ENCODE measurements at regions of chr15 and their contacts with region 1.

Region 1: DNA sequence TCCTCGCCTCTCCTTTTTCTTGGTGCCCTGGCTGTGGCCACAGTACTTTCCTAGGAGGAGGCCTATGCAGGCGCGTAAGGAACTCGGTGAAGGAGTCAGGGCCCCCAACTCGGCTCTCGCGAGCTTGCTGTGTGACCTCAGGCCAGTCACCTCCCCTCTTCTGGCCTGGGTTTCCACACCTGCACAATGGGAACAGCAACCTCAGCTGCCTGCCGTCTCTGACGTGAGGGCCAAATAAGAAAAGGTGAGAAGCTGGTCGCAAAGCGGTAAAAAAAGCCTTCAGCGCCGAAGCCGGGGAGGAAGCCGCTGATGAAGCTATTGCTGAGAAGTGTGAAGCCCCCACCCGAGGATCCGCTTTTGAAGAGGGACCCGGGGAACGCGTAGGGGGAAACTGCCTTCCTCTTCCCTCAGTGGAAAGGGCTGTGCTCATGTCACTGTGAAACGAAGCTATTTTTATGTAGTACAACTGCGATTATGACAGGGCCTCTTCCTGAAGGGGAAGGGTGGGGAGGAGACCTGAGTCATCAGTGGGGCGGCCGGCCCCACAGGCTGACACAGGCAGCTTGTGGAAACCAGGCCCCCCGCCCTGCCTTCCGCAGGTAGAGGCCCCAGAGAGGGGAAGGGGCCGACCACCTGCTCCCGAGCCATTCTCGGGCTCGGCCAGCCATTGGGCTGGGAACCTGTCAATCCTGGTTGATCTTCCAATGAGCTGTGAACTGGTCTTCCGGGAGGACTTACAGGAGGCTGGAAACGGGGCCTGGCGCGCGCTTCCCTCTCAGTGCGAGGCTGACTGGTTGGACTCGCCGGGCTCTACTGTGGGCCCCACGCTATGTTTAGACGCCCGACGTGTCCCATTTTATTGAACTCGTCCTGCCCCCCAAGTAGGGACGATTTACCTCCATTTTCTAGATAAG is 18.0 kb upstream of the ANKDD1A start:
- DNase-seq: peak; percentile 99
- ATAC-seq: peak; percentile 81
- H3K4me3 ChIP-seq: peak overlapping the region; percentile 78
- H3K27ac ChIP-seq: peak overlapping the region; percentile 97
- H3K4me1 ChIP-seq: peaks cover 42% of the 10 kb centered on the region
- H3K27me3 ChIP-seq: no peaks in the 10 kb centered on the region
- CTCF ChIP-seq: no peak
- EP300 ChIP-seq: peak in 1 of 2 experiments; percentile 72; a peak in 2 of 4 replicates
- POLR2A ChIP-seq: peak; percentile 86
- RAD21 ChIP-seq: no peak; the same call in 1 of the 2 replicates

Region 2: GRCh38 chr15:63487076-63487757 is 1406.5 kb before region 1 on chr15:
- CTCF ChIA-PET with region 1: no interaction called
- POLR2A ChIA-PET with region 1: no interaction called
- RAD21 ChIA-PET with region 1: no interaction called
- SMC1A ChIA-PET with region 1: no interaction called
- in situ Hi-C with region 1: loop called (anchors 25 kb)
- intact Hi-C with region 1: no loop called
- DNase-seq: no peak
- ATAC-seq: peak; percentile 74
- H3K4me3 ChIP-seq: peak overlapping the region; percentile 42; the same call in 1 of the 2 replicates
- H3K27ac ChIP-seq: peak overlapping the region; percentile 89
- H3K4me1 ChIP-seq: peaks cover 57% of the 10 kb centered on the region
- H3K27me3 ChIP-seq: no peaks in the 10 kb centered on the region
- CTCF ChIP-seq: peak; percentile 84 to 98 (median 97)
- EP300 ChIP-seq: no peak
- POLR2A ChIP-seq: no peak
- RAD21 ChIP-seq: peak; percentile 82

Region 3: DNA sequence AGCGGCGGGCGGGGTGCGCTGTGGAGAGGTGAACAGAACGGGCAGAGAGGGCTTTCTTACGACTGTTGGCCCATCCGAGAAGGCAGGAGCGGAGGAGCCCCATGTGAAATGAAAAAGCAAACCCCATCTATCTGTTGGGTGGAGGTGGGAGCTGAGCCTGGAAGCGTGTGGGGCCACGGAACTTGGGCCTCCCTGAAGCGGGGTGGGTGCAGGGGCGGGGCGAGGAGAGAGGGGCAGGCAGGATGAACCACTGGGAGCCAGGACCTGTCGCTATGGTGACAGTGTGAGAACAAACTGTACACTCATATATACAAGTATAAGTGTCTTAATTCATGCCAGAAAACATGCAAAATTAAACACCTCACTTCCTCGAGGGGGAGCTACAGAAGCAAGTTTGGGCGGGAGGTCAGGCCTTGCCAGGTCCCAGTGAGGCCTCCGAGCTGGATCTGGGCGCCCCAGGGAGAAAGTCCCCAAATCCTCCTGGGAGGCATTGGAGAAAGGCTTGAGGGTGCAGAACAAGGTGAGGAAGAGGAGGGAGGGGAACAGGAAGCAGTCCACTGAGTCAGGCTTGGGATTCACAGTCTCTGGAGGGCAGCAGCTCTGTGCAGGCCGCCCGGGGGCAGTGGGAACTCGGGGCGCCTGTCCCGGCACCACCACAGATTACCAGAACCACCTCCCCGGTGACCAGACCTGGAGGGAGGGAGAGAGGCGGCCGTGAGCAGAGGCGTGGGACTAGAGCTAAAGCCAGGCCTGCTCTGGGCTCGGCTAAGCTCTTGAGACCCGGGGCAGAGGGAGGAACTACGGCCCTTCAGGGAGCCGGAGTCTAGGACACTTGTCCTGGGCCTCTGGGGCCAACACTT is 153.2 kb before region 1 on chr15:
- CTCF ChIA-PET with region 1: interaction called, 35 read pairs
- POLR2A ChIA-PET with region 1: interaction called, 4 read pairs
- RAD21 ChIA-PET with region 1: interaction called, 24 read pairs
- SMC1A ChIA-PET with region 1: interaction called, 6 read pairs
- in situ Hi-C with region 1: no loop called
- intact Hi-C with region 1: no loop called
- DNase-seq: no peak
- ATAC-seq: peak; percentile 80
- H3K4me3 ChIP-seq: no peak overlapping the region
- H3K27ac ChIP-seq: no peak overlapping the region
- H3K4me1 ChIP-seq: no peaks in the 10 kb centered on the region
- H3K27me3 ChIP-seq: no peaks in the 10 kb centered on the region
- CTCF ChIP-seq: peak; percentile 21 to 48 (median 25); a peak in 4 of 6 replicates
- EP300 ChIP-seq: no peak
- POLR2A ChIP-seq: no peak
- RAD21 ChIP-seq: peak; percentile 68

Region 4: GRCh38 chr15:64825431-64826294 is 68.1 kb before region 1 on chr15 and contains the start of gene PIF1:
- CTCF ChIA-PET with region 1: interaction called, 18 read pairs
- POLR2A ChIA-PET with region 1: interaction called, 34 read pairs
- RAD21 ChIA-PET with region 1: interaction called, 41 read pairs
- SMC1A ChIA-PET with region 1: interaction called, 29 read pairs
- in situ Hi-C with region 1: no loop called
- intact Hi-C with region 1: loop called (anchors 2 kb)
- DNase-seq: peak; percentile 98
- ATAC-seq: peak; percentile 93
- H3K4me3 ChIP-seq: peak within 1 kb of the TSS; percentile 88
- H3K27ac ChIP-seq: peak within 1 kb of the TSS; percentile 85
- H3K4me1 ChIP-seq: peaks cover 14% of the 10 kb centered on the region
- H3K27me3 ChIP-seq: no peaks in the 10 kb centered on the region
- CTCF ChIP-seq: peak in 1 of 3 experiments; percentile 9; a peak in 1 of 6 replicates
- EP300 ChIP-seq: peak in 1 of 2 experiments; percentile 34; a peak in 1 of 4 replicates
- POLR2A ChIP-seq: peak; percentile 88
- RAD21 ChIP-seq: no peak
- polyA plus RNA-seq, gene PIF1: 3.7 to 7.2 TPM

Region 5: GRCh38 chr15:64856429-64857145 is 37.2 kb before region 1 on chr15:
- CTCF ChIA-PET with region 1: interaction called, 11 read pairs
- POLR2A ChIA-PET with region 1: interaction called, 8 read pairs
- RAD21 ChIA-PET with region 1: interaction called, 6 read pairs
- SMC1A ChIA-PET with region 1: interaction called, 51 read pairs
- in situ Hi-C with region 1: no loop called
- intact Hi-C with region 1: no loop called
- DNase-seq: no peak
- ATAC-seq: no peak
- H3K4me3 ChIP-seq: no peak overlapping the region
- H3K27ac ChIP-seq: no peak overlapping the region
- H3K4me1 ChIP-seq: no peaks in the 10 kb centered on the region
- H3K27me3 ChIP-seq: no peaks in the 10 kb centered on the region
- CTCF ChIP-seq: no peak
- EP300 ChIP-seq: no peak
- POLR2A ChIP-seq: no peak
- RAD21 ChIP-seq: no peak

Region 6: GRCh38 chr15:64905119-64905831 is 11.5 kb after region 1 on chr15:
- CTCF ChIA-PET with region 1: interaction called, 44 read pairs
- POLR2A ChIA-PET with region 1: interaction called, 3 read pairs
- RAD21 ChIA-PET with region 1: interaction called, 33 read pairs
- SMC1A ChIA-PET with region 1: interaction called, 21 read pairs
- in situ Hi-C with region 1: no loop called
- intact Hi-C with region 1: no loop called
- DNase-seq: no peak
- ATAC-seq: peak; percentile 98
- H3K4me3 ChIP-seq: peak overlapping the region; percentile 46; the same call in 1 of the 2 replicates
- H3K27ac ChIP-seq: 0 out of 2 replicates have a peak overlapping the region, but pooled peaks have one; percentile 20
- H3K4me1 ChIP-seq: peaks cover 13% of the 10 kb centered on the region
- H3K27me3 ChIP-seq: no peaks in the 10 kb centered on the region
- CTCF ChIP-seq: peak; percentile 87 to 91 (median 88)
- EP300 ChIP-seq: no peak
- POLR2A ChIP-seq: peak; percentile 24; the same call in 1 of the 2 replicates
- RAD21 ChIP-seq: peak; percentile 86

Region 7: DNA sequence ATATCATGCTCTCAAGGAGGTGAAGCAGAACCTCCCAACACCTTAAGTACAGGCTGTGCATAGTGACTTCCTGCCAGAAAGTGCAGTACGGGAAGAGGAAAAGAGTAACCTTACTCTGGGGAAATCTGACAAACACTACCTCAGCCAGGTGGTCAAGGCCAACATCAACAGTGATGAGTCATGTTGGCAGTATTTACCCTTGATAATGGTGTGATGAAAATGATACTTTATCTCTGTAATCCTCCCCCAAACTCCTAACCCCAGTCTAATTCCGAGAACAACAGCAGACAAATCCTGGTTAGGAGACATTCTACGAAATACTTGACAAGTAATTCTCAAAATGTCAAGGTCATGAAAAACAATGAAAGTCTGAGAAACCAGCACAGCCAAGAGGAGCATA is 44.5 kb after region 1 on chr15:
- CTCF ChIA-PET with region 1: no interaction called
- POLR2A ChIA-PET with region 1: no interaction called
- RAD21 ChIA-PET with region 1: no interaction called
- SMC1A ChIA-PET with region 1: no interaction called
- in situ Hi-C with region 1: no loop called
- intact Hi-C with region 1: no loop called
- DNase-seq: no peak
- ATAC-seq: no peak
- H3K4me3 ChIP-seq: no peak overlapping the region
- H3K27ac ChIP-seq: no peak overlapping the region
- H3K4me1 ChIP-seq: no peaks in the 10 kb centered on the region
- H3K27me3 ChIP-seq: no peaks in the 10 kb centered on the region
- CTCF ChIP-seq: no peak
- EP300 ChIP-seq: no peak
- POLR2A ChIP-seq: no peak
- RAD21 ChIP-seq: no peak

Region 8: GRCh38 chr15:65008983-65009382 is 115.2 kb after region 1 on chr15:
- CTCF ChIA-PET with region 1: no interaction called
- POLR2A ChIA-PET with region 1: no interaction called
- RAD21 ChIA-PET with region 1: interaction called, 10 read pairs
- SMC1A ChIA-PET with region 1: interaction called, 3 read pairs
- in situ Hi-C with region 1: no loop called
- intact Hi-C with region 1: no loop called
- DNase-seq: no peak
- ATAC-seq: peak; percentile 56; the same call in 2 of the 3 replicates
- H3K4me3 ChIP-seq: no peak overlapping the region
- H3K27ac ChIP-seq: no peak overlapping the region
- H3K4me1 ChIP-seq: no peaks in the 10 kb centered on the region
- H3K27me3 ChIP-seq: no peaks in the 10 kb centered on the region
- CTCF ChIP-seq: peak in 2 of 3 experiments; percentile 23 to 46; a peak in 3 of 6 replicates
- EP300 ChIP-seq: no peak
- POLR2A ChIP-seq: no peak
- RAD21 ChIP-seq: peak; percentile 50

Measured in GM12878 (cell line).